ENCODE measurements at regions of chr6 and their contacts with region 1.

Region 1: DNA sequence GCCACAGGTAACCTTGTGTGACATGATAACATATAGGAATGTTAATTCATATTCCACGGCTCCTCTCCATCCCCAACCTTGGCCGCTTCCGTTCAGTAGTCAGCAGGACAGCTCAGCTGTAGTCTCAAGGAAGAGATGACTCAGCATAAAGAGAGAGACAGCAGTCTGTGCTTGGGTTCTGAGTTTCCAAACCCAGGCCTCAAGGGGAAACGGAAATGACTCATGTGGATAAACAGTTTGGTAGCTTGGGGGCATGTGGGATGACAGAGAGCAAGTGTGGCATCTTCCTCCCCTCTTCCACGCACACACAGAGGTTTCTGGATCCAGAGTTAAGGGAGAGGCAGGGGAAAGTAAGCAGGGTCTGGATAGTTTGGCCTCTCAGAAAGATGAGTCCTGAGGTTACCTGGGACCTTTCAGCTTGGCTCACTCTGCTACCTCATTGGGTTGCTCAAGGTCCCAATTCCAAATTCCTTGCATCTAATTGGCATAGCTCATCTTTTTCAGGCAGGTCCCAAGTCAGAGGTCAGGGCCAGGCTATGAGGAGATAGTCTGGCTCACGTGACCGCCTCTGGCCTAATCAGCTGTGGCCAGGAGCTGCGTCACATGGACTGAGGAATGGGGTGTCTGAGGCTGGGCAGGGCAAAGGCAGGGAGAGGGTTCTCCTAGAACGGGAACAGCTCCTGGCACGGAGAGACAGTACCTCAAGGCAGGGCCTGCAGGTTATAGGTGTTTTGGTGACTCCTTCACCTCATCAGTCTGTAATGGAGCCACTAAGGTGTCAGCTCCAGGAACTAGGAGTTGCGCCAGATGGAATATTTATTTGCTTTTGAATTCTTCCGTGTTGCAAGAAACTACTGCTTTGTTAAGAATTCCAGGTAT is 36.5 kb upstream of the MLN start:
- DNase-seq: peak; percentile 36
- H3K4me3 Mint-ChIP-seq: no peak overlapping the region
- H3K27ac Mint-ChIP-seq: peak overlapping the region; percentile 54
- H3K4me1 Mint-ChIP-seq: peaks cover 20% of the 10 kb centered on the region
- H3K27me3 Mint-ChIP-seq: peaks cover 27% of the 10 kb centered on the region

Region 2: DNA sequence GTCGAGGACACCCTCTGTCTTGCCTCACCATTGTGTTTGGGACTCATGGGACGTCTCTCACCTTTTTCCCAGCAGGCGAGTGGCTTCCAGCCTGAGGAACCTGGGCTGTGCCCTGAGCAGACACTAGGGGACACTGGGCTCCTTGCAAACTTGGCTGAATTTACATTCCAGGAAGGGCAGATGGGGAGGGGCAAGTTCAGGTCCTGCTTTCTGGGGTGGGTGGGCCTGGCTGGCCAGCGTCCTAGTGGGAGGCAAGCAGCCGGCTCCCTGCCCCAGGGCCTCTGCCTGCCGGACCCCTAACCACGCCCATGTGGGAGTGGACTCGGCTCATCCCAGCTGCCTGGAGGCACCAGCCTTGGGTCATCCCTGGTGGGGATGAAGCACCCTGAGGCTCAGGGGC is 11.7 kb after region 1 on chr6:
- CTCF ChIA-PET with region 1: interaction called, 37 read pairs
- POLR2A ChIA-PET with region 1: no interaction called
- DNase-seq: peak; percentile 49
- H3K4me3 Mint-ChIP-seq: no peak overlapping the region
- H3K27ac Mint-ChIP-seq: no peak overlapping the region
- H3K4me1 Mint-ChIP-seq: peaks cover 15% of the 10 kb centered on the region
- H3K27me3 Mint-ChIP-seq: peaks cover 55% of the 10 kb centered on the region

Measured in activated CD4-positive, alpha-beta T cell treated with anti-CD3 and anti-CD28 coated beads, Interleukin-2, amount 10 ng/mL, durations not matched to agents 7 days and 5 days (primary cell).